Activated CD4-positive, alpha-beta memory T cell treated with anti-CD3 and anti-CD28 coated beads, Interleukin-2, amount 10 ng/mL, durations not matched to agents 7 days and 5 days (primary cell): ENCODE measurements at regions of chr14 and their contacts with region 1.

Region 1: DNA sequence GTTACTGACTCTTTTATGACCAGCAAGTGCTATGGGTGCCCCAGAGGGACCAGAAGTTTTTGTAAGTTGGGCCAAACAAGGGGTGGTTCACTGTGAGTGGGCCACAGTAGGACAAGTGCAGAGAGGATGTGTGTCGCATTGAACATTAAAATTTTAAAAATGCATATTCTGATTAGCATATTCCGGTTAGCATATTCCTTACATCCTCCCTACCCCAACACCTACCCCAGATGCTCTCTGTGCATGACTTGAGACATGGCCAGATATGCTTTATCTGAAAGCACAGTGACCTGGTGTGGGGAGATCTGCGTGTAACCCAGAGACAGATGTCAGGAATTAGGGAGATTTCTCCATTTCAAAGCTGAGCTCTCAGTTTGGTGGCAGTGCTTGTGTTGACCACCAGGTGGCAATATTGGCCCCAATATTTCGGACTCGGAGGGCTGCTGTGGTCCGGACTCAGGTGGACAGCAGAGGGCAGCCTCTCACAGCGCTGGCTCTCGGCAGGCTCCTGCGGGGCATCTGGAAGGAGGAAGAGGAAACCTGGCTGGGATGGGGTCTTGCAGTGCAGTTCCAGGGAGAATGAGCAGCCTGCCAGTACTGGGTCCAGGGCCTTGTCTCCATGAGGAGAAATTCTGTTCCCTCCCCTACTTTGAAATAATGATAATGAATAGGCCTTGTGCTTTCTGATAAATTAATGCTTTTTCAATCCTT is 1.6 kb upstream of the CEBPE start:
- DNase-seq: peak; percentile 85
- H3K4me3 Mint-ChIP-seq: peak overlapping the region; percentile 36
- H3K27ac Mint-ChIP-seq: peak overlapping the region; percentile 83
- H3K4me1 Mint-ChIP-seq: peaks cover 34% of the 10 kb centered on the region
- H3K27me3 Mint-ChIP-seq: peaks cover 1% of the 10 kb centered on the region

Region 2: GRCh38 chr14:22872033-22872832 is 248.5 kb before region 1 on chr14:
- CTCF ChIA-PET with region 1: no interaction called
- POLR2A ChIA-PET with region 1: no interaction called
- DNase-seq: peak; percentile 76
- H3K4me3 Mint-ChIP-seq: peak overlapping the region; percentile 86
- H3K27ac Mint-ChIP-seq: peak overlapping the region; percentile 97
- H3K4me1 Mint-ChIP-seq: peaks cover 39% of the 10 kb centered on the region
- H3K27me3 Mint-ChIP-seq: no peaks in the 10 kb centered on the region

Region 3: GRCh38 chr14:22882529-22883172 is 238.0 kb before region 1 on chr14:
- CTCF ChIA-PET with region 1: no interaction called
- POLR2A ChIA-PET with region 1: no interaction called
- DNase-seq: no peak
- H3K4me3 Mint-ChIP-seq: no peak overlapping the region
- H3K27ac Mint-ChIP-seq: no peak overlapping the region
- H3K4me1 Mint-ChIP-seq: peaks cover 23% of the 10 kb centered on the region
- H3K27me3 Mint-ChIP-seq: peaks cover 23% of the 10 kb centered on the region

Region 4: DNA sequence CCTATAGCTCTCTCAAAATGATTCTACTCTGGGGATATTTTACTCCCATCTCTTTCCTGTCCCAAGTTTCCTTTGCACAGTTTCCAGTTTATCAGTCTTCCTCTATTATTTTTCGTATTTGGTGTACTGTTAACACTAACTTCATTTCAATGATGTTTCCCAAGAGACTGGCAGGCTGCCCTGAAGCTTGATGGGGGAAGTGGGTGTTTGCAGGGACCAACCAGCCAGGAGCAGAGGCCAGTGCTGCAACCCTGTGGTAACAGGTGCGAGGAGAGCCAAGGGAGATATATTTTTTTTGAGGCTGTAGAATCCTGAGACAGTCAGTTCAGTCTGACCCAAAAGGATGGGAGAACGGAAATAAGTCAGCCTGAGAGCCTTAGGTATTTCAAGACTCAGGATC is 10.2 kb after region 1 on chr14:
- CTCF ChIA-PET with region 1: interaction called, 19 read pairs
- POLR2A ChIA-PET with region 1: interaction called, 3 read pairs
- DNase-seq: no peak
- H3K4me3 Mint-ChIP-seq: no peak overlapping the region
- H3K27ac Mint-ChIP-seq: no peak overlapping the region
- H3K4me1 Mint-ChIP-seq: peaks cover 14% of the 10 kb centered on the region
- H3K27me3 Mint-ChIP-seq: peaks cover 10% of the 10 kb centered on the region

Region 5: DNA sequence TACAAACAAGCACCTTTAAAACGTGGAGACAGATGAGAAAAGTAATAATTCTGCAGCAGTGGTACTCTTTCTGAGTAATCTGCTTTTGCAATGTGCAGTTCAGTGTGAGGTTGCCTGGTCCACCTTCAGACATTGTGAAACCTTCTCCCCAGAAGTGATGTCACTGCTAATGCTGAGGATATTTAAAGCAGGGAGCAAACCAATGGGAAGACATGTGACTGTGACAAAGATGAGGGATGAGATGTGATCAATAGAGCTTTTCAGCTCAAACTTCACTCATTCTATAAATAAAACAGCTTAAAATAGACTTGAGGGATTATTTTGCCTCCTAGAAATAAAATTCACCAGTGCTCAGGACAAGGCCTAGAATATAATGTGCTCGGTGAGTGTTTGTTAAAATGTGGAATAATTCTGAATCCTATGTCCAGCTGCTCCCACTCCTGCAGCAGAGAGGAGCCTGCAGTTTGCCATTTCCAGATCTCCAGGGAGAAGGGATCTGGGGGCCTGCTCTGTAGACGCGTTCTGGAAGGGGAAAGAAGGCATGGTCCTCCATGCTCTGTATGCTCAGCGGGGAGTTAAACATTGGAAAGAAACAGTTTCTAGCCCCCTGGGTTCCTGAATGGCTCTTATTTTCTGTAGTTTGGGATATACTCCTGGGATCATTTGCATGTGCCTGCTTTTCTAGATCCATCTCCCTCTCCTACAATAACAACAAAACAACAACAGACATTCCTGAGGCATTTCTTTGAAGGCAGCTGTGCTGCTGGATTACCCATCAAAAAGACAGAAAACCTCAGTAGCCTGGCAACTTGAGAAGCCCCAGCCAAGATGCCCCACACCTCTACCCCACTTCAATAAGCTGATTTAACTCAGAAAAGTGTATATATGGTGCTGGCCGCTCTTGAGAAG is 53.8 kb after region 1 on chr14:
- CTCF ChIA-PET with region 1: interaction called, 46 read pairs
- POLR2A ChIA-PET with region 1: interaction called, 3 read pairs
- DNase-seq: no peak
- H3K4me3 Mint-ChIP-seq: no peak overlapping the region
- H3K27ac Mint-ChIP-seq: no peak overlapping the region
- H3K4me1 Mint-ChIP-seq: no peaks in the 10 kb centered on the region
- H3K27me3 Mint-ChIP-seq: peaks cover 24% of the 10 kb centered on the region

Region 6: DNA sequence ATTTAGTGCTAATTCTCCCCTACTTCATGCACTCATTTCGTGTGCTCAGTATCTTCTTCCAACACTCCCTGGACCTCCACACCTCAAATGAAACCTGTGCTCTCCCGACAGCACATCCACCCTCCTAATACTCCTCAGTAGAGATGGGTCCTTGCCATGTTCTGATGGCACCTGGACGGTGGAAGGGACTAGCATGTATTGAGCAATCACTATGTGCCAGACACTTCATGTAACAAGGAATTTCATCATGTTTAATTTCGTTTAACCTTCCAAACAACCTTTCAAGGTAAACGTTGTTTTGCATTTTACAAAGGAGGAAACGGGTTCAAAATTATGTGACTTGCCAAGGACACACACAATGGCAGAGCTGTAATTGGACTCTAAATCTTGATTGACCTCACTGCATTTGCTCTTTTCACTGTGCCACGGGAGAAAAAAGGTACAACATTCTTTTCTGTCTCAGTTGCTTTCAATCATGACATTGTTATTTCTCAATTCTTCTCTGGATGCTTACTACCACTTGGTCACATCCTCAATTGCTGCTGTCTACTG is 74.9 kb after region 1 on chr14:
- CTCF ChIA-PET with region 1: interaction called, 214 read pairs
- POLR2A ChIA-PET with region 1: interaction called, 5 read pairs
- DNase-seq: no peak
- H3K4me3 Mint-ChIP-seq: no peak overlapping the region
- H3K27ac Mint-ChIP-seq: no peak overlapping the region
- H3K4me1 Mint-ChIP-seq: no peaks in the 10 kb centered on the region
- H3K27me3 Mint-ChIP-seq: peaks cover 11% of the 10 kb centered on the region

Region 7: GRCh38 chr14:23294734-23295561 is 174.3 kb after region 1 on chr14:
- CTCF ChIA-PET with region 1: interaction called, 27 read pairs
- POLR2A ChIA-PET with region 1: interaction called, 17 read pairs
- DNase-seq: peak; percentile 59
- H3K4me3 Mint-ChIP-seq: no peak overlapping the region
- H3K27ac Mint-ChIP-seq: peak overlapping the region; percentile 0
- H3K4me1 Mint-ChIP-seq: peaks cover 20% of the 10 kb centered on the region
- H3K27me3 Mint-ChIP-seq: peaks cover 1% of the 10 kb centered on the region

Region 8: DNA sequence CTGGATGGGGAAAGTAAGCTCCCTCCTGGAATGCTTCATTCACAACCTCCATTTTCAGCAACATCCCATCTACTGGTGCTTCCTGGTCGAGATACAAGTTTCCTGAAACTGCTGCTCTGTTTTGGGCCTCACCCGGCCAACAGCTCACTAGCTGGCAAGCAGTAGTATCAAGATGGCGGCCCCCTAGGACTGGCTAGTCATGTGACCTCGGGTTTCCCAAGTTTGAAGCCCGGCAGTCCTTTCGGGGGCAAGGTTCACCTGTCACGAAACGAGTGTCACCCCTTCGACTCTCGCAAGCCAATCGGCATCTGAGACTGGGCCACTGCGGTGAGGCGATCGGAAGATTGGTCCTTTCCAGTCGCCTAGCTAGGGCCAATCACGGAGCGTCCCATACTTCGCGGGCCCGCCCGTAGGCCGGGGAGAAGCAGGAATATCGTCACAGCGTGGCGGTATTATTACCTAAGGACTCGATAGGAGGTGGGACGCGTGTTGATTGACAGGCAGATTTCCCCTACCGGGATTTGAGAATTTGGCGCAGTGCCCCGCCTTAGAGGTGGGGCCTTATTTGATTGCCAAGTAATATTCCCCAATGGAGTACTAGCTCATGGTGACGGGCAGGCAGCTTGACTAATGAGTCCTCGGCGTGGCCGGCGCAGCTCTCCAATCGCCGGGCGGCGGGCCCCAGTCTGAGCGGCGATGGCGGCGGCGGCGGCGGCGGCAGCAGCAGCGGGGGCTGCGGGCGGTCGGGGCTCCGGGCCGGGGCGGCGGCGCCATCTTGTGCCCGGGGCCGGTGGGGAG is 200.3 kb after region 1 on chr14 and contains the start of gene PABPN1:
- CTCF ChIA-PET with region 1: interaction called, 27 read pairs
- POLR2A ChIA-PET with region 1: interaction called, 22 read pairs
- DNase-seq: peak; percentile 99
- H3K4me3 Mint-ChIP-seq: peak within 1 kb of the TSS; percentile 87
- H3K27ac Mint-ChIP-seq: peak within 1 kb of the TSS; percentile 95
- H3K4me1 Mint-ChIP-seq: peaks cover 31% of the 10 kb centered on the region
- H3K27me3 Mint-ChIP-seq: no peaks in the 10 kb centered on the region
- total RNA-seq, gene PABPN1: 194 to 198 TPM